ENCODE measurements at regions of chr14 and their contacts with region 1.

Region 1: DNA sequence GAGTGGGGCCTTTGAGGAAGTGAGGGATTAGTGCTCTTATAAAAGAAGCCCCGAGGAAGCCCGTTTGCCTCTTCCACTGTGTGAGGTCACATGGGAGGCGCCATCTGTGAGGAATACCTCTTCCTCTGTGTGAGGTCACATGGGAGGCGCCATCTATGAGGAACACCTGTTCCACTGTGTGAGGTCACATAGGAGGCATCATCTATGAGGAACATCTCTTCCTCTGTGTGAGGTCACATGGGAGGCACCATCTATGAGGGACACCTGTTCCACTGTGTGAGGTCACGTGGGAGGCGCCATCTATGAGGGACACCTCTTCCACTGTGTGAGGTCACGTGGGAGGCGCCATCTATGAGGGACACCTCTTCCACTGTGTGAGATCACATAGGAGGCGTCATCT is 69.7 kb downstream of the SLC24A4 start:
- DNase-seq: no peak
- H3K4me3 ChIP-seq: no peak overlapping the region
- H3K27ac ChIP-seq: no peak overlapping the region
- H3K4me1 ChIP-seq: peaks cover 2 to 13% (median 6%) of the 10 kb centered on the region in 4 experiments
- H3K27me3 ChIP-seq: no peaks in the 10 kb centered on the region
- CTCF ChIP-seq: no peak
- EP300 ChIP-seq: no peak
- POLR2A ChIP-seq: no peak
- RAD21 ChIP-seq: no peak

Region 2: GRCh38 chr14:92382677-92383076 is 10.0 kb before region 1 on chr14:
- CTCF ChIA-PET with region 1: interaction called, 12 read pairs
- POLR2A ChIA-PET with region 1: no interaction called
- DNase-seq: no peak
- H3K4me3 ChIP-seq: no peak overlapping the region
- H3K27ac ChIP-seq: no peak overlapping the region
- H3K4me1 ChIP-seq: peaks cover 0 to 10% (median 0%) of the 10 kb centered on the region in 4 experiments; a peak in 2 of 7 replicates
- H3K27me3 ChIP-seq: no peaks in the 10 kb centered on the region
- CTCF ChIP-seq: peak; percentile 62 to 68 (median 65)
- EP300 ChIP-seq: no peak
- POLR2A ChIP-seq: no peak
- RAD21 ChIP-seq: peak; percentile 54 to 63

Region 3: GRCh38 chr14:93086441-93087055 is 693.8 kb after region 1 on chr14:
- CTCF ChIA-PET with region 1: no interaction called
- POLR2A ChIA-PET with region 1: no interaction called
- DNase-seq: no peak
- H3K4me3 ChIP-seq: no peak overlapping the region
- H3K27ac ChIP-seq: peak overlapping the region; percentile 73
- H3K4me1 ChIP-seq: peaks cover 0 to 23% (median 11%) of the 10 kb centered on the region in 4 experiments; a peak in 6 of 7 replicates
- H3K27me3 ChIP-seq: no peaks in the 10 kb centered on the region
- CTCF ChIP-seq: no peak
- EP300 ChIP-seq: no peak
- POLR2A ChIP-seq: no peak
- RAD21 ChIP-seq: no peak

Measured in H1 (cell line).